ENCODE measurements at regions of chrX and their contacts with region 1.

Region 1: GRCh38 chrX:12814420-12814819 is 23.2 kb downstream of the PRPS2 start:
- DNase-seq: peak; percentile 49 to 77 (median 71)
- H3K4me3 ChIP-seq: no peak overlapping the region
- H3K27ac ChIP-seq: no peak overlapping the region
- H3K4me1 ChIP-seq: peaks cover 0 to 2% (median 0%) of the 10 kb centered on the region in 4 experiments
- H3K27me3 ChIP-seq: peaks cover 0 to 5% (median 0%) of the 10 kb centered on the region in 5 experiments

Region 2: DNA sequence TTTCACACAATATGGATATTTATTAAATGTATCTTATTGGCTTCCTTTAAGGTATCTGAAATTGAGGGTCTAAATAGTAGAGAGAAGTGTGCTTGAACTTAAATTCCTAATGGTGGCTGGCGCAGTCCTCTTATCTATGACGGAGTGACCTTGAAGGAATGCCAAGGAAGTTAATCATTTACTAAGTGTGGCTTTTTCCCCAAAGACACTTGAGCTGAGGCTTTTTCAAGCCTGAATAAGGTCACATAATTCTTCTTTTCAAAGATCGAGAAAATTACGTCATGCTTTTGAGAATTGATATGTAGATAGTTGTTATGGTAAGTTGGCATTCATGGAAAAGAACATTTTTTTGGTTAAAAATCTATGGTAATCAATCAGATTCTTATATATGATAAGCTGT is 34.9 kb before region 1 on chrX:
- CTCF ChIA-PET with region 1: no interaction called
- POLR2A ChIA-PET with region 1: no interaction called
- DNase-seq: no peak
- H3K4me3 ChIP-seq: no peak overlapping the region
- H3K27ac ChIP-seq: no peak overlapping the region
- H3K4me1 ChIP-seq: no peaks in the 10 kb centered on the region
- H3K27me3 ChIP-seq: peaks cover 0 to 6% (median 0%) of the 10 kb centered on the region in 5 experiments

Region 3: DNA sequence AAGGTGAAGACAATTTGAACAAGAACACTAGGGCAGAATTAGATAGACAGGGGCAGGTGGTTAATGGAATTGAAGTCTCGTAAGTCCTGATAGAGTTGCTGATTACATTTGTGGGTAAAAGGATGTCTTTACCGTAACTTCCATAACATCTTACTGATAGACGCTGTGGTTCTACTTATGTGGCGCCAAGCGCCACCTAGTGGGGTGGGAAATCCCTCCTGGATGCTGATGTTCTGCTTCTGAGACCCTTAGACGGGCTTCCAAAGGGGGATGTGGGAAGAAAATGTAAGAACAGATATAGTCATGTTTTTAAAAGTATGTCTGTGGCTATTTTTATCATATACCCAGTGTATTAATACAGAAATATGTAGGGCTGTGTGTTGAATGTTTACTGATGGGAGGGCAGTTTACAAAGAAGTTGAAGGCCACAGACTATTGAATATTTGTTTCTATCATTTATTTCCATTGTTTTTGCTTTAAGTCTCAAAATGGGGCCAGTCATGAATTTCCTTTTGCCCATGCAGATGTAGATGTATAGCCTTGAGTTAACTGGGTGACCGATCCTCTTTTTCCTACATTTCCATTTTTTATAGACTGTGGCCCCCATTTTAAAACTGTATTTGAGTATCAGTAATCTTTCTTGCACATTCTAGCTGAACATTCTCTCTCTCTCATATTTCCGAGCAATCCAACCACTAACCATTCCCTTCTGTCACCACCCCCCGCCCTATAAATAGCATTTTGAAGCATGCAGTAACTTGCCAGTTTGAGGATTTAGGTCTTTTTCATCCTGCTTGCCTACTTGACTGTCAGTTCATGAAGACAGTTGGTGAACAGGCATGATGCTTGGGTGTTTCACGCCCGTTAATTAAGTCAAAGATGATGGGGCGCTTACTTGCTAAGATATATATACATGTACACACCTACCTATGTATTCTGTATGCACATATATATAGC is 79.9 kb after region 1 on chrX:
- CTCF ChIA-PET with region 1: interaction called, 38 read pairs
- POLR2A ChIA-PET with region 1: no interaction called
- DNase-seq: peak; percentile 44 to 70 (median 53)
- H3K4me3 ChIP-seq: no peak overlapping the region
- H3K27ac ChIP-seq: no peak overlapping the region
- H3K4me1 ChIP-seq: peaks cover 4 to 26% (median 7%) of the 10 kb centered on the region in 4 experiments
- H3K27me3 ChIP-seq: peaks cover 0 to 17% (median 0%) of the 10 kb centered on the region in 5 experiments

Region 4: GRCh38 chrX:12901486-12901885 is 87.1 kb after region 1 on chrX:
- CTCF ChIA-PET with region 1: interaction called, 38 read pairs
- POLR2A ChIA-PET with region 1: no interaction called
- DNase-seq: peak; percentile 56 to 83 (median 82)
- H3K4me3 ChIP-seq: no peak overlapping the region
- H3K27ac ChIP-seq: no peak overlapping the region
- H3K4me1 ChIP-seq: peaks cover 0 to 8% (median 2%) of the 10 kb centered on the region in 4 experiments
- H3K27me3 ChIP-seq: peaks cover 0 to 18% (median 0%) of the 10 kb centered on the region in 5 experiments